ENCODE measurements at regions of chr19 and their contacts with region 1.

Region 1: DNA sequence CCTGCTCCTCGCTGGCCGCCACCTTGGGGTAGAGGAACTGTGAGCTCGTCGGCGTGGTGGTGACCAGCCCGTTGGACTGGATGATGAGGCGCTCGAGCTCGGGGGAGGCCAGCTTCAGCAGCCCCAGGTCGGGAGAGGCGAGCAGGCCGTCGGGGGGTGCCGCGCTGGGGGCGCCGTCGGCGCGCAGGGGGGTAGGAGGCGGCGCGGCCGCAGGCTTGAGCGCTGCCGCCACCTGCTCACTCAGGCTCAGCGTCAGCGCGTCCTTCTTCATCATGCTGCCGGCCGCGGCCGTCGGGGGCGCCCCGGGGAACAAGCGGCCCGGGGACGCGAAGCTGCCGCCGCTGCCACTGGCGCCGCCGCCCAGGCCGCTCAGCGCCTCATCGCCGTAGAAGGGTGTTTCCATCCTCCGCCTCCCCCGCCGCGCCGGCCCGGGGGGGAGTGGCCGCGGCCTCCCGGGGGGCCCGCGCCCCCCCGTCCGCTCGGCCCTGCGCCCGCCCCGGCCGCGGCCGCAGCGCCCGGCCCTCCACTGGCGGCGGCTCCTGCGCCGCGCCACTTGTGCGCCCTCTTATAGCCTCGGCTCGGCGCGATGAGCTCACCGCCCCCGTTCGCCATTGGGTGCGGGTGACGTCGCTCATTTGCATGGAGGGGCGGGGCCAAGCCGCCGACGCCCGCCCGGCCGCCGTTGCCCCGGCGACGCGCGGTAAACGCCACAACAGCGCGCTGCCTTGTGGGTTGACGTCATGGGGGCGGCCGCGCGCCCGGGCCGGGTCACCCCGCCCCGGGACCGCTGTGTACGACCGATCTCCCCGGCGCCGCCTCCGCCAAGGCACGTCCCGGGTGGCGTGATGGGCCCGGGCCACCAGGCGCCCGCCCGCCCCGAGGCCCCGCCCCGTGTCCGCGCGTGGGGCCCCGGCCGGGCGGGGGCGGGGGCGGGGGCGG is at the start of gene JUND:
- H3K4me3 ChIP-seq: peak within 1 kb of the TSS; percentile 88
- H3K27ac ChIP-seq: peak within 1 kb of the TSS; percentile 98
- H3K4me1 ChIP-seq: no peaks in the 10 kb centered on the region
- CTCF ChIP-seq: peak; percentile 20

Region 2: GRCh38 chr19:17966550-17967256 is 314.6 kb before region 1 on chr19 and contains the start of gene KCNN1:
- CTCF ChIA-PET with region 1: no interaction called
- POLR2A ChIA-PET with region 1: no interaction called
- H3K4me3 ChIP-seq: peak within 1 kb of the TSS; percentile 49
- H3K27ac ChIP-seq: no peak within 1 kb of the TSS
- H3K4me1 ChIP-seq: no peaks in the 10 kb centered on the region
- CTCF ChIP-seq: no peak

Region 3: GRCh38 chr19:18224525-18225354 is 56.6 kb before region 1 on chr19:
- CTCF ChIA-PET with region 1: interaction called, 10 read pairs
- POLR2A ChIA-PET with region 1: interaction called, 19 read pairs
- H3K4me3 ChIP-seq: peak overlapping the region; percentile 23
- H3K27ac ChIP-seq: no peak overlapping the region
- H3K4me1 ChIP-seq: no peaks in the 10 kb centered on the region; the same call in 1 of the 2 replicates
- CTCF ChIP-seq: no peak

Region 4: GRCh38 chr19:18239303-18239702 is 42.0 kb before region 1 on chr19:
- CTCF ChIA-PET with region 1: no interaction called
- POLR2A ChIA-PET with region 1: no interaction called
- H3K4me3 ChIP-seq: no peak overlapping the region
- H3K27ac ChIP-seq: no peak overlapping the region
- H3K4me1 ChIP-seq: no peaks in the 10 kb centered on the region
- CTCF ChIP-seq: no peak

Region 5: DNA sequence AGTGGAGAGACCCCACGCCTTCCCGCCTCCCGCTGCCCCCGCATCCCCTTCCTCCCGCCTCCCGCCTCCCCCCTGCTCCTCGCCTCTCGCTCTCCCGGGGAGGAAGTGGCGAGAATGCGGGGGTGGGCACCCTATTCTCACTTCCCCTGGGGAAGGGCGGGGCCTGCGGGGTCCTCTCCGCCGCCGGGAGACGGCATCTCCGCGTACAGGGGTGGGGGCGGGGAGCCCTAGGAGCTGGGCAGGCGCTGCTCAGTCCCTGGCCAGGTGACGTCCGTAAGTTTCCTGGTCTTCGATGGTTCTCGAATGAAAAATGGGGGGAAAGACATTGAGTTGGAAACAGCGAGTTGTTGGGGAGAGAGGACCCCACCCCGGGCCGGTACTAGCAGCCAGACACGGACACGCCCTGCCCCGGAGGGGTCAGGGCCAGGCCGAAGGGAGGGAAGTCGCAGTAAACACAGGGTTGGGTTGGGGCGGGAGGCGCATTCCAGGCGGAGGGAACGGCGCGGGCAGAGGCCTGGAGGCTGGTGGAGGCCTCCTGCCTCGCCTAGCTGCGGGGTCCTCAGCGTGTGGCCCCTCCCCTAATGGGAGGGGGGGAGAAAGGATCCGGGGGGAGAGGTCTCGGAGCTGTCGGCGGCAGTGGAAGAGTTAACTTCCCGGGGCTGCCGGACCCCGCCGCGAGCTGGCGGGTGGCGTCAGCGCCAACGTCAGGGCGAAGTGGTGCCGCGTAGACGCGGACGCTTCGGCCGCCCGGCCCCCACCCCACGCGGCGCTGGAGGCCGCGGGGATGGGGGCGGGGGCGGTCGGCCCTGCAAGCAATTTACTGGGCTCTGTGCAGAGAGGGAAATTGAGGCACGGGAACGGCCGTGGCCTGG is 10.5 kb after region 1 on chr19:
- CTCF ChIA-PET with region 1: interaction called, 22 read pairs
- POLR2A ChIA-PET with region 1: interaction called, 184 read pairs
- H3K4me3 ChIP-seq: peak overlapping the region; percentile 49
- H3K27ac ChIP-seq: peak overlapping the region; percentile 58
- H3K4me1 ChIP-seq: peaks cover 2% of the 10 kb centered on the region; the same call in 1 of the 2 replicates
- CTCF ChIP-seq: no peak

Region 6: GRCh38 chr19:18322759-18323460 is 41.6 kb after region 1 on chr19 and contains the start of gene LSM4:
- CTCF ChIA-PET with region 1: interaction called, 195 read pairs
- POLR2A ChIA-PET with region 1: interaction called, 118 read pairs
- H3K4me3 ChIP-seq: peak within 1 kb of the TSS; percentile 92
- H3K27ac ChIP-seq: peak within 1 kb of the TSS; percentile 84
- H3K4me1 ChIP-seq: peaks cover 7% of the 10 kb centered on the region
- CTCF ChIP-seq: no peak

Region 7: DNA sequence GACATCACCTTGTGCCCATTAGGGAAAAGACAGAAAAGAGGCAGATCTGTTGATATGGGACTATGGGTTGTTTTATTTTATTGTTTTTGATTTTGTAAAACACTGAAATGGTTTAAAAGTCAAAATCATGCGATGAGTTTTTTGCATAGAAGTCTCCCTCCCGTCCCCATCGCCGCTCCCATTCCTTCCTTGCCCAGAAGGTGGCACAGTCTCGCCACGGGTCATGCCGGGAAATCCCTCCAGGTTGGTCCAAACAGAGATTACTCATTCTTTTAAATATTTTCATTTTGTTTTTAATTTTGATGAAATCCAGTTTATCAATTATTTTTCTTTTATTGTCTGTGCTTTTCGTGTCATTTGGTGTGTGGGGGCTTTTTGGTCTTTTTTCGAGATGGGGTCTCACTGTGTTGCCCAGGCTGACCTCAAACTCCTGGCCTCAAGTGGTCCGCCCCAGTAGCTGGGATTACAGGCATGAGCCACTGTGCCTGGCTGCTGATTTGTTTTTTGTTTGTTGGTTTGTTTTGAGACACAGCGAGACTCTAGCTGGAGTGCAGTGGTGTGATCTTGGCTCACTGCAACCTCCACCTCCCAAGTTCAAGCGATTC is 68.3 kb after region 1 on chr19:
- CTCF ChIA-PET with region 1: interaction called, 26 read pairs
- POLR2A ChIA-PET with region 1: interaction called, 37 read pairs
- H3K4me3 ChIP-seq: no peak overlapping the region
- H3K27ac ChIP-seq: no peak overlapping the region
- H3K4me1 ChIP-seq: no peaks in the 10 kb centered on the region
- CTCF ChIP-seq: peak; percentile 68

Region 8: GRCh38 chr19:18408053-18408476 is 126.7 kb after region 1 on chr19:
- CTCF ChIA-PET with region 1: interaction called, 70 read pairs
- POLR2A ChIA-PET with region 1: interaction called, 18 read pairs
- H3K4me3 ChIP-seq: no peak overlapping the region
- H3K27ac ChIP-seq: no peak overlapping the region
- H3K4me1 ChIP-seq: no peaks in the 10 kb centered on the region
- CTCF ChIP-seq: peak; percentile 52; the same call in 1 of the 2 replicates

Region 9: DNA sequence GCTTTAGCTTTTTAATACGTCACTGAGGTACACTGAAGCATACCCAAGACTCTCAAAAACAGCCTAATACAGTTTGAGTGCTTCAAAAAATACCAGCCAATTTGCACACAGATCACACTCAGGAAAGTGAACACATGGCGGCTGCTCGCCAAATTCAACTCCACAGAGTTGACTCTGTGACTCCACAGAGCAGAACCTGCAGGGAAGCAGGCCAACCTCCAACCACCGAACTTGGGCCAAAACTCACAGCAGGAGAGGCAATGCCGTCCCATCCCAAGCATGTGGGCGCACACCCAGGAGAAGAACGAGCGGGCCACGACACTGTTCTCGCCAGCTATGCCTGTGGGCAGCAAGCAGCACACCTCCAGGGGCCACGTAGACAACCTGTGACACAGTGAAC is 219.4 kb after region 1 on chr19:
- CTCF ChIA-PET with region 1: no interaction called
- POLR2A ChIA-PET with region 1: no interaction called
- H3K4me3 ChIP-seq: no peak overlapping the region
- H3K27ac ChIP-seq: no peak overlapping the region
- H3K4me1 ChIP-seq: peaks cover 10% of the 10 kb centered on the region
- CTCF ChIP-seq: no peak